Left cardiac atrium (tissue), 4 donors: ENCODE measurements at regions of chr17 and their contacts with region 1.

Region 1: DNA sequence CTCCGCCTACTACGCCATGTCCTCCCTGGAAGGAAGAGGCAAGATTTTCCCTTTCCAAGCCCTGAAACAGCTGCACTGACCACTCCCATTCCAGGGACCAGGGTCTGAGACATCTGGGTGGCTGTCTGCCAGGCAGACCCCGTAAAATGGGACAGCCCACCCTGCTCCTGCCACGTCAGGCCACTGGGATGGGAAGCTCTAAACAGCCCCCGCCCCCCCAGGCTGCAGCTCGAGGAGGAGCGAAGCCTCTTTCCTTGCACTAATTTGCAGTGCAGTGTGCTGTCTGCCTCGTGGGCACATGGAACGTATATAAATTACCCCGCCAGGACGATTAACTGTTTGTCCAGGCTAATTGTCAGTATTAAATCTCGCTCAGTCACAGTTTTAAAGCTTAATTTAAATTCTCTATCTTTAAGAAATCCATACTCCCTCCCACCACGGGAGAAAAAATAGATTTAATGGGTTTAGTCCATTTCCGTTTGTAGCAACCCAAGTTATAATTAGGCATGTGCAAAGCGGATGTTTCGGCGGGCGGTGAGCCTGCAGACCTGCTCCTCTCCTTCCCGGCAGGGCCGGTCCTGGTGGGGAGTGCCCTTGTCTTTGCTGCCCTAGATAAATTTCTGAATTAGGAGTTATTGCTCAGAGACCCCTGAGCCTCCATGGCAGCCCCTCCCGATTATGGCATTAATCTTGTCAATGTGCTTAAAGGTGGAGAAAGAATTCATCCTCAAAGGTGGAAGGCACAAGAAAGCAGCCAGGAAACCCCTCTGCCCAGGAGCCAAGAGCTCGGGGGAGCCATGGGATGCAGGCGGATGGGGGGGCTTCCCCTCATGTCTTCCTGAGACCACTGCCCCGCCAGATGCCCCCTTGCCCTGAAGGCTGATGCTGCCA is 268.0 kb upstream of the TNRC6C start:
- DNase-seq: no peak
- ATAC-seq: peak; percentile 28 to 45

Region 2: DNA sequence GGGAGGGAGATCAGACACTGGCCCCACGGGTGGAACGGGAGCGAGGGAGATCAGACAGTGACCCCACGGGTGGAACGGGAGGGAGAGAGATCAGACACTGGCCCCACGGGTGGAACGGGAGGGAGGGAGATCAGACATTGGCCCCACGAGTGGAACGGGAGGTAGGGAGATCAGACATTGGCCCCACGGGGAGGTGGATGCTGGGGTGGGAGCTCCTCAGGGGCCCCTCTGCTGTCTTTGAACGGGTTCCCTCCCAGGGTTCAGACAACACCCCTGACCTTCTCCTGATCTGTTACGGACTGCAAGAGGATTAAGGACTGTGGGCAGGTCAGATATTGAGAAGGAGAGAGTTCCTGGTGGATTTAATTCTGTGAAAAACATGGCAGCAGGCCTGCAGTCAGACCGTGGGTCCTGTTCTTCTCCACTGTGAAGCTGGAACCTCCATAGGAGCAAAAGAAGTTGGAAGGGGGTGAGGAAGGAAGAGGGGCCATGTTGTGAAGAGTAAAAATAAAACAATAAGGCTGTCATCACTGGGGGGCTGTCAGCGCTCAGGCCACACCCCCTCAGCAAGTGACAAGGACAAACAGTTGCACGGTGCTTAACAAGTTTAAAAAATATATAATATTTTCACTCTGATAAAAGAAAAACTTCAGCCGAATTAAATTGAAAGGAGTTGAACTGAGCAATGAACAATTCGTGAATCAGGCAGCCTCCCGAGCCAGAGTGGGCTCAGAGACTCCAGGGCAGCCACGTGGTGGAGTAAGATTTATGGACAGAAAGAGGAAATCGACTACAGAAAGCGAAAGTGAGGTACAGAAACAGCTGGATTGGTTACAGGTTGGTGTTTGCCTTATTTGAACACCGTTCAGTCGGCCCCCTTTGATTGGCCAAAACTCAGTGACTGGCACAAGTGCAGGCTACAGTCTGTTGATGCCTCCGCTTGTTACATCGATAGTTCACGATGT is 80.7 kb before region 1 on chr17:
- intact Hi-C with region 1: loop called in 1 of 2 experiments (anchors 10 kb)
- DNase-seq: no peak
- ATAC-seq: no peak